GM12878 (cell line): ENCODE measurements at regions of chr14 and their contacts with region 1.

Region 1: DNA sequence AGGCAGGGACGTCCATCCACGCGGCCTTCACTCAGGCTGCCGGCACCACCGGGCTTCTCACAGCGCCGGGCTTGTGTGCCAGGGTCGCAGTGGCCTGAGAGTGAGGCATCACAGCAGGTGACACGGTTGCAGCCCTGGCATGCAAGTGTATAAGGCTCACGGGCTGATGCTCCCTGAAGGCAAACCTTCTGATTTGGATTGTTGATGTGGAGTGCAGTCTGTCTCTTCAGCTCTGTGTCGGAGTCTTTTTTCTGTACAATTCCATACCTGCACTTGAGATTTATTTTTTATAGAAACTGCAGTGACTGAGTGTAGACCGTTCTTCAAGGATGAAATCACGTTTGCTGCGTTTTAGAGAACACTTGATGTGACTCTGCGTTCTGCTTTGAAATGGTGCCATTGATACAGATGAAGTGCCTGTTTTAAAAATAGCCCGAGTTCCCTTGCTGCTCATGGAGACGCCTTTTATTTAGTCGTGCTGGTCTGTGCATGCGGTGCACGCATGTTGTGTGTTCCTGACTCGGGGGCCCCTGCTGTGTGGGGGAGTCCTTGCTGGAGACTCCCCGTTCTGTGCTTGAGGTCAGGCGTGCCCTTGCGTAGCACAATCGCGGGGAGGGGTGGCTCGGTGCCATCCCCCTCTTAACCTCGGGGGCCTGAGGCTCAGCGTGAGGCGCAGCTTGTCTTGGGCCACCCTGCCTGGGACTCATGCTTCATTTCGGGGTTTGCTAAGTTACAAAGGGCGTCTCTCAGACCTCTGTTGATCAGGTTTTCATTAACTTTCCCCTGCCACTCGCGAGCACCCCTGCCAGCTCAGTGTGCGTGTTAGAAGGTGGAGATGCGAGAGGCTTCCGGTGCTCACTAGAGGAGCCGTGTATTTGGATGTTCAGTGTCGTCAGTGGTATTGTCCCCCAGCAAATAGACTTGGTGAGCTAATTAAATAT is 21.6 kb upstream of the AMN start:
- DNase-seq: no peak
- ATAC-seq: peak; percentile 76
- H3K4me3 ChIP-seq: peak overlapping the region; percentile 43
- H3K27ac ChIP-seq: peak overlapping the region; percentile 98
- H3K4me1 ChIP-seq: peaks cover 59% of the 10 kb centered on the region
- H3K27me3 ChIP-seq: no peaks in the 10 kb centered on the region
- CTCF ChIP-seq: no peak
- EP300 ChIP-seq: no peak; a peak in 2 of 4 replicates
- POLR2A ChIP-seq: peak; percentile 61
- RAD21 ChIP-seq: no peak

Region 2: DNA sequence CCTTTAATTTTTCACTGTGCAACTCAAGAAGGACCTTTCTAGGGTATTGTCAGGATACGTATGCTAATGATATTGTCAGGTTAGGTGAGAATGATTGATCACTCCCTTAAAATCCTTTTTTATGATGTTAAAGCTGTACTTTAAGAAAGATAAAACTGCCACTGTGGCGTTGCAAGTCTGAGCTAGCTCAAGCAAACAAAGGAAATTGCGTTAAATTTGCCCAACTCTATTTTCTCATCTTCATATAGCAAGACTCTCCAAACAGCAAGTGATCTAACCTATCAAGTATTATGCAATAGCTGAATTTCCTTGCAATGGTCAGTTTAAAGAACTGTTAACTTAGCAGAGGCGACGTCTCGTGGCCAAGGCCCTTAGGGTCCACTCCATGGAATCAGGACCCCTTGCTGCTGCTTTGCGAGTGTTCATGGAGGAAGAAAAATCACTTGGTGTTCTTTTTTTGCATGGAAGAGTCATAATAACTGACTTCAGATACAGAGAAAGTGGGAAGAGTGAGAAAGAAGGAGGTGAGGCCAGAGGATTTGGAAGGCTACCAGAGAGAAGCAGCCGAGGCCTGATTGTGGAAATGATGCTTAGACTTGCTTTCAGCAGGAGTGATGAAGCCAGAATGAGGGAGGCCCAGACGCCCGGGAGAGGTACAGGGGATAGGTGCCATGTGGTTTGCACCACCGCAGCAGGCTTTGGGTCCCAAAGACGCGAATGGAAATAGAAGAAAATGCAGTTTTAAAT is 121.2 kb before region 1 on chr14:
- CTCF ChIA-PET with region 1: interaction called, 18 read pairs
- POLR2A ChIA-PET with region 1: interaction called, 14 read pairs
- RAD21 ChIA-PET with region 1: interaction called, 25 read pairs
- SMC1A ChIA-PET with region 1: interaction called, 15 read pairs
- in situ Hi-C with region 1: no loop called
- intact Hi-C with region 1: loop called (anchors 5 kb)
- DNase-seq: no peak
- ATAC-seq: no peak
- H3K4me3 ChIP-seq: peak overlapping the region; percentile 90
- H3K27ac ChIP-seq: peak overlapping the region; percentile 98
- H3K4me1 ChIP-seq: peaks cover 31% of the 10 kb centered on the region
- H3K27me3 ChIP-seq: no peaks in the 10 kb centered on the region
- CTCF ChIP-seq: peak in 1 of 3 experiments; percentile 24; a peak in 1 of 6 replicates
- EP300 ChIP-seq: no peak
- POLR2A ChIP-seq: no peak
- RAD21 ChIP-seq: peak; percentile 13; the same call in 1 of the 2 replicates